ENCODE measurements at regions of chr4 and their contacts with region 1.

Region 1: DNA sequence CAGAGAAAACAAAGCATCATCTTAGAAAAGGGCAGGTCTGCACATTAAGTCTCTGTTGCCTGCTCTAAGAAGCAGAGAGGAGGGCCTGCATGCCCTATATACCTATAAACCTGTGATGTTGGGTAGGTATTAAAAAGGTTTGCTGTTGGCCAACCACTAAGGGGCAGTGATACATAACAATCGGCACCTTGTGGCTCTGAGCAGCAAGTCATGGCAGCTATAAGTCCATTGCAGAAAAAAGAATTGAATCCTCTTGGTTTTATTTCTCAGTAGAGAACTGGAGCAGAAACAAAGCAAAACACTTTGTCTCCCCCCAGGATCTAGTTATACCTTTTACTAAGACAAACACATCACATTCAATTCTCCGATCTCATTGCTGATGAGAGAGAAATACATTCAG is 1364.4 kb downstream of the STIM2 start:
- DNase-seq: peak in 1 of 2 experiments; percentile 18
- H3K4me3 ChIP-seq: no peak overlapping the region
- H3K27ac ChIP-seq: no peak overlapping the region
- H3K4me1 ChIP-seq: peaks cover 9% of the 10 kb centered on the region; the same call in 1 of the 2 replicates
- H3K27me3 ChIP-seq: no peaks in the 10 kb centered on the region
- CTCF ChIP-seq: peak; percentile 54

Region 2: GRCh38 chr4:28211676-28212470 is 13.2 kb before region 1 on chr4:
- CTCF ChIA-PET with region 1: interaction called, 16 read pairs
- POLR2A ChIA-PET with region 1: no interaction called
- intact Hi-C with region 1: no loop called
- DNase-seq: peak in 1 of 2 experiments; percentile 3
- H3K4me3 ChIP-seq: no peak overlapping the region
- H3K27ac ChIP-seq: no peak overlapping the region
- H3K4me1 ChIP-seq: no peaks in the 10 kb centered on the region
- H3K27me3 ChIP-seq: no peaks in the 10 kb centered on the region
- CTCF ChIP-seq: no peak

Measured in PC-9 (cell line).